Stomach (tissue), 19 donors: ENCODE measurements at regions of chr2 and their contacts with region 1.

Region 1: DNA sequence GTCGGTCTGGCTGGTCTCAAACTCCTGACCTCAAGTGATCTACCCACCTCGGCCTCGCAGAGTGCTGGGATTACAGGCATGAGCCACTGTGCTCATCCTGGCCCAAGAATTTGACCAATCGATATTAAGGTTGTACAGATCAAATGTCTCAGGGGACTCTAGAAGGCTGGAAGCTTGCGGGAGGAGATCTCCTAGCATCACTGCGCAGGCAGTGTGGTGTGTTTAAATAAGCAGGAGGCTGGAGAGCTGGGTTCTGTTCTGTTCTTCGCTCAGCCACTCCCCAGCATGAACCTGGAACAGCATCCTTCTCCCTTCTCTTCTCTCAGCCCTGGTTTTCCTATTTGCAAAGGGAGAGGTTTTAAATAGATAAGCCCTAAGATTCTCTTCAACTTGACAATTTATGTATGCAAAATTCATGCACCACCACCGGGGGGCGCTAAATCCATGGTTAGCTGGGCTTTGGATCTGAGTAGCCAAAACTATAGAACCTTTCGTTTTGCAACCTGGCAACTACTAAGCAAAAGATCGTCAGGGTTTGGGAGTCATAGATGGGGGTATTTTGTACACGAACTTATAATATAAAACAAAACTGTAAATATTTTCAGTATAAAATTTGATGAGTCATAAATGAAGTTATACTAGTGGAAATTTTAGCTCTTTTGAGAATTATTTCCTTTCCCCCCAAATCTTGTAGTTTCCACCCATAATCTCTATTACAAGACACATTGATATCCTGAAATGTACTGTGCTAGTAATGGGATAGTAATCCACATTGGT is 60.6 kb downstream of the SLC16A14 start:
- DNase-seq: peak; percentile 80 to 87
- H3K4me3 ChIP-seq: no peak overlapping the region
- H3K27ac ChIP-seq: no peak overlapping the region
- H3K4me1 ChIP-seq: peaks cover 0 to 12% (median 4%) of the 10 kb centered on the region in 4 donors
- H3K27me3 ChIP-seq: no peaks in the 10 kb centered on the region
- CTCF ChIP-seq: peak in 5 of 7 experiments; percentile 55 to 85 (median 71)
- EP300 ChIP-seq: no peak
- POLR2A ChIP-seq: no peak

Region 2: DNA sequence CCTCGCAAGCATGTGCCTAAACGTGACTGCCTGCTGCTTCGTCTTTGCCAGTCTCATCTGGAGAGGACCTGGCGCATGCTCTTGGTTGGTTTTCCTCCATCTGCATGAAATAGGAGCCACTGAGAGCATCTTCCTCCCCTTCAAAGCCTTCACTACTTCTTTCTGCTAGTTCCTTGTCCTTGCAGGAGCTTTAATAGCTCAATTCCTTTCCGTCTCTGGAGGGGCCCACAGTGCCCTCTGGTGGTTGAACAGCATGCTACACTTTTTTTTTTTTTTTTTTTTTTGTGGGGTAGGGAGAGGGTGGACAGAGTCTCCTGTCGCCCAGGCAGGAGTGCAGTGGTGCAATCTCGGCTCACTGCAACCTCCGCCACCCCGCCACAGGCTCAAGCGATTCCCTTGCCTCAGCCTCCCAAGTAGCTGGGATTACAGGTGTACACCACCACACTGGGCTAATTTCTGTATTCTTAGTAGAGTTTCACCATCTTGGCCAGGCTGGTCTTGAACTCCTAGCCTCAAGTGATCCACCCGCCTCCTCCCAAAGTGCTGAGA is 152.1 kb after region 1 on chr2:
- intact Hi-C with region 1: loop called (anchors 10 kb)
- DNase-seq: peak; percentile 59 to 67
- H3K4me3 ChIP-seq: no peak overlapping the region
- H3K27ac ChIP-seq: no peak overlapping the region
- H3K4me1 ChIP-seq: peaks cover 0 to 8% (median 2%) of the 10 kb centered on the region in 4 donors
- H3K27me3 ChIP-seq: no peaks in the 10 kb centered on the region
- CTCF ChIP-seq: peak in 5 of 7 experiments; percentile 54 to 83 (median 75)
- EP300 ChIP-seq: no peak
- POLR2A ChIP-seq: no peak

Region 3: DNA sequence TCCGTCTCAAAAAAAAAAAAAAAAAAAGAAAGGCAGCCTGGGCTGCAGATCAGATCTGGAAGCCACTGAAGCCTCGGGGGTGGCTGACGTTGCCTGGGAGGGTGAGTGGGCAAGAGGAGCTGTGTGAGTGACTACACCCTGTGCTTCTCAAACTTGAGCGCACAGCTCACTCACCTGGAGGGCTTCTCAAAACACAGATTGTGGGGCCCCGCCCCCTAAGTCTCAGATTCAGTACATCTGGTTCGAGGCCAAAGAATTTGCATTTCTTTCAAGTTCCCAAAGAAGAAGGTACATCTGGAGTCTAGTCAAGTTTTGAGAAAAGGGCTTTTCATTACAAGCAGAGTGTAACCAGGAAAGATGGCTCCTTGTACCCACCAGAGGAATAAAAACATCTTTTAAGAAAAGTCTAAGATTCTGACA is 606.8 kb after region 1 on chr2:
- intact Hi-C with region 1: loop called (anchors 5 kb)
- DNase-seq: peak; percentile 14 to 39
- H3K4me3 ChIP-seq: no peak overlapping the region
- H3K27ac ChIP-seq: no peak overlapping the region
- H3K4me1 ChIP-seq: peaks cover 0 to 6% (median 3%) of the 10 kb centered on the region in 4 donors
- H3K27me3 ChIP-seq: no peaks in the 10 kb centered on the region
- CTCF ChIP-seq: no peak
- EP300 ChIP-seq: no peak
- POLR2A ChIP-seq: no peak